ENCODE measurements at regions of chr15 and their contacts with region 1.

Region 1: DNA sequence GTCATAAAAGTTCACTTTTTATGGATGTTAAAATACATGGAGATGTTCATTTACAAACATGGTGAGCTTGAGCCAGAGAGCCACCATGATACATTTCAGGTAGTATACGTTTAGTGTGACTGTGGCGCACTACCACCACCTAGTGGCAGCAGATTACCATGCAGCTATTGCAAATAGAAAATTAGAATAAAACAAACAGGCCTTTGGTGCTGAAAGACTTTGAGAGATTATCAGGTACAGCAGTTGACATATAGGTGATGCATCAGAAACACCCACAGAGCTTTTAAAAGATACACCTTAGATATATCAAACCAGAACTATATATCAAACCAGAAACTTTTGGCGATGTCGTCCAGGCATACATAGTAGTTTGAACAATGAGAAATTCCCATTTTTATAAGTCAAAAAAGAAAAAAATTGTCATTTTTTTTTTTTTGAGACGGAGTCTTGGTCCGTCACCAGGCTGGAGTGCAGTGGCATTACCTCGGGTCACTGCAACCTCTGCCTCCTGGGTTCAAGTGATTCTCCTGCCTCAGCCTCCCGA is 42.0 kb upstream of the ICE2 start:
- DNase-seq: peak; percentile 65
- H3K4me3 Mint-ChIP-seq: no peak overlapping the region
- H3K27ac Mint-ChIP-seq: peak overlapping the region; percentile 55
- H3K4me1 Mint-ChIP-seq: peaks cover 31% of the 10 kb centered on the region
- H3K27me3 Mint-ChIP-seq: no peaks in the 10 kb centered on the region

Region 2: GRCh38 chr15:60362321-60363086 is 158.4 kb before region 1 on chr15:
- intact Hi-C with region 1: loop called (anchors 1 kb)
- DNase-seq: peak; percentile 52
- H3K4me3 Mint-ChIP-seq: peak overlapping the region; percentile 18
- H3K27ac Mint-ChIP-seq: peak overlapping the region; percentile 75
- H3K4me1 Mint-ChIP-seq: peaks cover 28% of the 10 kb centered on the region
- H3K27me3 Mint-ChIP-seq: no peaks in the 10 kb centered on the region

Region 3: DNA sequence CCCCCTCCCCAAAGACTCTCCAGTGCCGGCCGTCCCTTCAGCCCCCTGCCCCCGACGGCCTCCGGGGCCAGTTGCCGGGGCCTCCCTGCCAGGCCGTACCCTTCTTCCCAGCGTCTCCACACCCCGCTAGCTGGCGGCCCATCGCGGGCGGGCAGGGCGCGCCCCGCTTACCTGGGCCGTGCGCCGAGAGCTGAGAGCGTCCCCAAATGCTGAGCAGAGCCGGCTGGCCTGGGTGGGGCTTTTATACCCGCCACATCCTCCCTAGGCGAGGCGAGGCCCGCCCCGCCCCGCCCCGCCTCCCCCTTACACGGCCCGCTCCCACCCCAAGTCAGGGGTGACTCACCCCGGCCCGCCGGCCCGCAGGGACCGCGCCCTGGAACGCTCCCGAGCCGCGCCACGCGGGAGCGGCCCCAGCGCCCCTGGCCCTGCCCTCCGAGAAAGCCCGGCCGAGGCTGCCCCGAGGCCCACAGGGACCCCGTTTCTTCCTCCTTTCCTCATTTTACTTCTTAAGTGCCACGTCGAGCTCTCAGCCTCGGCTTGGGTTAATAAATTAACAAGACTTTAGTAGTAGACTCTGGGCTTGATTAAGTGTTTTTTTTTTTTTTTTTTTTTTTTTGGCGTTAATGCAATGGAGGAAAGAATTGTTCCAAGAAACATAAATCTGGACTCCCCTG is 123.0 kb before region 1 on chr15 and contains the start of gene ANXA2:
- intact Hi-C with region 1: loop called (anchors 2 kb)
- DNase-seq: peak; percentile 81
- H3K4me3 Mint-ChIP-seq: peak within 1 kb of the TSS; percentile 96
- H3K27ac Mint-ChIP-seq: peak within 1 kb of the TSS; percentile 97
- H3K4me1 Mint-ChIP-seq: peaks cover 63% of the 10 kb centered on the region
- H3K27me3 Mint-ChIP-seq: peaks cover under 1% of the 10 kb centered on the region
- total RNA-seq, gene ANXA2: 262 and 267 TPM in 2 replicates

Region 4: GRCh38 chr15:60507596-60508424 is 13.1 kb before region 1 on chr15:
- intact Hi-C with region 1: loop called (anchors 1 kb)
- DNase-seq: peak; percentile 43
- H3K4me3 Mint-ChIP-seq: no peak overlapping the region
- H3K27ac Mint-ChIP-seq: peak overlapping the region; percentile 11
- H3K4me1 Mint-ChIP-seq: peaks cover 29% of the 10 kb centered on the region
- H3K27me3 Mint-ChIP-seq: no peaks in the 10 kb centered on the region

Region 5: DNA sequence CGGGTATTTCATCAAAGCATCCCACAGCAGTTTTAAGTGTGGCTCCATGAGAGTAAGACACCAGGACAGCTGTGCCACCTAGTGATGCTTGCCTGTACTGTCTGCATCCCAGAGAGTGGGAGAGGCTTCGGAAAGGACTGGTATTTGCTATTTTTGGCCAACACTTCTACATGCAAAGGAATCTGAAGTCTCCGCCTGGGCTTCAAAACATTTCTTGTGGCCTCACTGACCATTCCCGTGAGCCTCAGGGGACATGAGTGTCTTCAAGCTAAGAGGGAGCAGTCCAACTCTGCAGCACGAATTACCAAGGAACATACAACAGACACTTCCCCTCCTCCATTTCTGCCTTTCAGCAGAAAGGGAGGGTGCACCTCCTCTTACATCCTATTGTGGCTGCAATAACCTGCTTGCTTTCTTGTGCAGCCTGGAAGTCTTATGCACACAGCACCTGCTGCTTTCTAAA is 530.7 kb after region 1 on chr15:
- intact Hi-C with region 1: loop called (anchors 10 kb)
- DNase-seq: no peak
- H3K4me3 Mint-ChIP-seq: no peak overlapping the region
- H3K27ac Mint-ChIP-seq: no peak overlapping the region
- H3K4me1 Mint-ChIP-seq: no peaks in the 10 kb centered on the region
- H3K27me3 Mint-ChIP-seq: peaks cover 7% of the 10 kb centered on the region